Activated naive CD4-positive, alpha-beta T cell treated with anti-CD3 and anti-CD28 coated beads for 36 hours (primary cell): ENCODE measurements at regions of chr9 and their contacts with region 1.

Region 1: DNA sequence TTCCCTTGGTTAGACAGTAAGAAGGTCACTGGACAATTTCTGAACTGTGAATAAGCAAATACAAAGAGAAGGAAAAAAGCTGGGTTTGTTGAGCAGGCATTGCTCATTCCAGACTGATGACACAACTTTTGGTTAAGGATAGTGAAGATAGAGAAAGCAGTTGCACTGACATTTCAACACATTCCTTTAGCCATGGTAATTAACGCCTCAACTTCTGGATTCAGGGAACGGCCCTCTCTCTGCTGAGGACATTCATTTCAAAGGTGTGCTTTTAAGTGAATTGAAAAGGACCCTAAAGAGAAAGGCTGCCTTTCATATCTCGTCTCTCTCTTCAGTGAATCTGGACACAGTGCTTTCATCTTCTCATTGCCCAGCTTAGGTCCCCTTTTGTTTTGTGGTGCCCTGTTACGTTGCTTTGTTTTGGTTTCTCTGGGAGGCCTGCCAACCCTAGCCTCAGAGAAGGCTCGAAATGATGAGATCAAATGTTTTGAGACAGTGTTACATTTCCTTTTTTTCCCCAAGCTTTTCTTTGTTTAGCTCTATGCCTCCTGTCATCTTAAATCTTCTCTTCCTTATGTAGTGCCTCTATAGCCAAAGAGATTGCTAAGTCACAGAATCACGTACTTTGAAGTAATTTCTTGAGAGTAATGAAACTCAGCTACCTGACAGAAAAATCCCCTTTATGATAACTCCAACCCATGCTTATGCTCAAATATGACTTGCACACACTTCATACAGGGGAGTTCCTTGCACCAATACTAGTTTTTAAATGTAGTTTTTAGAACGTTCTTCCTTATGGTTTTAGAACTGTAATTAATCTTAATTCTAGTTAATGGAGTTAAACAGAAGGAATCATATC is 94.4 kb upstream of the IFNE start:
- DNase-seq: peak; percentile 80
- H3K4me3 Mint-ChIP-seq: peak overlapping the region; percentile 3
- H3K27ac Mint-ChIP-seq: peak overlapping the region; percentile 68
- H3K4me1 Mint-ChIP-seq: peaks cover 37% of the 10 kb centered on the region
- H3K27me3 Mint-ChIP-seq: peaks cover 2% of the 10 kb centered on the region

Region 2: GRCh38 chr9:21334701-21335632 is 241.6 kb before region 1 on chr9 and contains the start of gene KLHL9:
- CTCF ChIA-PET with region 1: no interaction called
- intact Hi-C with region 1: loop called (anchors 1 kb)
- DNase-seq: peak; percentile 93
- H3K4me3 Mint-ChIP-seq: peak within 1 kb of the TSS; percentile 84
- H3K27ac Mint-ChIP-seq: peak within 1 kb of the TSS; percentile 91
- H3K4me1 Mint-ChIP-seq: peaks cover 48% of the 10 kb centered on the region
- H3K27me3 Mint-ChIP-seq: no peaks in the 10 kb centered on the region
- total RNA-seq, gene KLHL9: 17.5 to 18.3 TPM

Region 3: DNA sequence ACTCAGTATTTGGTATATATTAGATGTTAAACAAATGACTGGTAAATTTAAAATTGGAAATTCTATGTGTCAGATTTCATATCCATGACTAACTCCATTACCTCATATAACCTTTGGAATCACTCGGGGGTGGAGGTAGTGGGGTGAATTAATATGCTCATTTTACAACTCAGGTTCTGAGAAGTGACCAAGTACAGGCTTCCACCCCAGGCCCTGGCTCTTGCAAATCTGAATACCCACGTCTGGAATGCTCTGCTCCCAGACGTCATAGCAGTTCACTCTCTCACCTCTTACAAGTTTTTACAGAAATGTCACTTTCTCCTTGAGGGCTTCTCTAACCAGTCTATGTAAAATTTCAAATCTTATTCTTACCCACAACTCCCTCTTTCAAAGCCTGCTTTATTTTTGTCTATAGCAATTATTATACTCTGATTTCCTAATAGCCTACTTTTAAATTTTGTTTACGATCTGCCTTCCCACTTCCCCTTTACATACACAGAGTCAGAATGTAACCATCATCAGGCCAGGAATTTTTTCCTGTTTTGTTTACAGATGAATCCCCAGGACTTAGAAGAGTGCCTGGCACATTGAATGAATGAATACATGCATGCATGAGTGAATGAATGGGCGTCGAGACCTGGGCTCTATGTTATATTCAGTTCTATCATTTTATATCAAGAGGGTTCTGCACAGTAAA is 39.7 kb after region 1 on chr9:
- CTCF ChIA-PET with region 1: no interaction called
- intact Hi-C with region 1: loop called (anchors 5 kb)
- DNase-seq: no peak
- H3K4me3 Mint-ChIP-seq: no peak overlapping the region
- H3K27ac Mint-ChIP-seq: no peak overlapping the region
- H3K4me1 Mint-ChIP-seq: peaks cover 46% of the 10 kb centered on the region
- H3K27me3 Mint-ChIP-seq: no peaks in the 10 kb centered on the region

Region 4: GRCh38 chr9:21777701-21778100 is 201.1 kb after region 1 on chr9:
- CTCF ChIA-PET with region 1: no interaction called
- intact Hi-C with region 1: loop called (anchors 5 kb)
- DNase-seq: no peak
- H3K4me3 Mint-ChIP-seq: no peak overlapping the region
- H3K27ac Mint-ChIP-seq: no peak overlapping the region
- H3K4me1 Mint-ChIP-seq: peaks cover 3% of the 10 kb centered on the region
- H3K27me3 Mint-ChIP-seq: no peaks in the 10 kb centered on the region

Region 5: DNA sequence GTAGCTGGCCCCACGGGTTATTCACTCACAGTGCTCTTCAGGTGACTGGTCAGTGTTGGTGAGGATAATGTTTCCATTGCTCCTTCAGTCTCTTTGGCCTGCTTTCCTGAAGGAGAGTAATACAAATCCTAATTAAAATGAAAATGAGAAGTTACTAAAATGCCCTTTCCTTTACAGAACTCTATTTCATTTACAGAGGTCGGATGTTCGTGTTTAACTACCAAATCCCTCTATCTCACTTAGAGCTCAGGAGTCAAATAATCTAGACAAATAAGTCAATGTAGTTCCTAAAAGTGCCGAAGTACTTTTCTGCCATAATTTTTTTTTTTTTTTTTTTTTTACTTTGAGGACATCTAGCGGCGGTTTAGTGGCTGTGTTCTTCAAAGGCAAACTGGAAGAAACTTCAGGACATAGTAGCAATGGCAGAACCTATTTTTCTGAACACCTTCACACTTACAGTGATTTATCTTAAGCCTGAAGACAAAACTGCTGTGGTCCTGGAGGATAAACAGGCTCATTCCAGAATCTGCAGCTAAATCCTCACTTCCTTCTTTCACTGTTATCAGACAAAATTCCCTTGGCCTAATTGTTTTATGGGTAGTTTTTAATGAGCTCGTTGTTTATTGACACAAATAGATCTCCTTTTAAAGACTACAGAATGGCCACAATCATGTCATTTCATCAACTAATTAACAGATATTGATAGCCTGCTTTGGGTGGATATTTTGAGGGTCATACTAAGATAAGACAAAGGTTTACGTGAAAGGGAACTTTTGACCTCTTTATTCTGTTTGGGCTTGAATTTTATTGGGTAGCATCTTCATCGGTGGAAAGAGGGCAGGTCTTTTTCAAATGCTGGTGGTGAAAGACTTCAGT is 662.5 kb after region 1 on chr9:
- CTCF ChIA-PET with region 1: no interaction called
- intact Hi-C with region 1: loop called (anchors 5 kb)
- DNase-seq: no peak
- H3K4me3 Mint-ChIP-seq: no peak overlapping the region
- H3K27ac Mint-ChIP-seq: no peak overlapping the region
- H3K4me1 Mint-ChIP-seq: peaks cover 49% of the 10 kb centered on the region
- H3K27me3 Mint-ChIP-seq: peaks cover 15% of the 10 kb centered on the region